ENCODE measurements at regions of chrX and their contacts with region 1.

Region 1: GRCh38 chrX:21972721-21973120 is 32.2 kb downstream of the SMS start:
- DNase-seq: peak in 1 of 2 donors; percentile 67
- ATAC-seq: peak; percentile 37
- H3K4me3 ChIP-seq: no peak overlapping the region
- H3K27ac ChIP-seq: peak overlapping the region in 1 of 2 donors; percentile 17
- H3K4me1 ChIP-seq: no peaks in the 10 kb centered on the region
- H3K27me3 ChIP-seq: no peaks in the 10 kb centered on the region

Region 2: GRCh38 chrX:21839334-21840192 is 133.2 kb before region 1 on chrX and contains the start of gene MBTPS2:
- intact Hi-C with region 1: loop called (anchors 5 kb)
- DNase-seq: peak; percentile 90 to 93
- ATAC-seq: peak; percentile 95
- H3K4me3 ChIP-seq: peak within 1 kb of the TSS; percentile 38 to 54
- H3K27ac ChIP-seq: peak within 1 kb of the TSS in 1 of 2 donors; percentile 56
- H3K4me1 ChIP-seq: no peaks in the 10 kb centered on the region
- H3K27me3 ChIP-seq: no peaks in the 10 kb centered on the region
- total RNA-seq, gene MBTPS2: 13.5 to 14.6 TPM

Region 3: GRCh38 chrX:22012051-22012450 is 39.3 kb after region 1 on chrX:
- intact Hi-C with region 1: no loop called
- DNase-seq: no peak
- ATAC-seq: no peak
- H3K4me3 ChIP-seq: no peak overlapping the region
- H3K27ac ChIP-seq: no peak overlapping the region
- H3K4me1 ChIP-seq: no peaks in the 10 kb centered on the region
- H3K27me3 ChIP-seq: no peaks in the 10 kb centered on the region